Naive thymus-derived CD4-positive, alpha-beta T cell (primary cell): ENCODE measurements at regions of chr11 and their contacts with region 1.

Region 1: DNA sequence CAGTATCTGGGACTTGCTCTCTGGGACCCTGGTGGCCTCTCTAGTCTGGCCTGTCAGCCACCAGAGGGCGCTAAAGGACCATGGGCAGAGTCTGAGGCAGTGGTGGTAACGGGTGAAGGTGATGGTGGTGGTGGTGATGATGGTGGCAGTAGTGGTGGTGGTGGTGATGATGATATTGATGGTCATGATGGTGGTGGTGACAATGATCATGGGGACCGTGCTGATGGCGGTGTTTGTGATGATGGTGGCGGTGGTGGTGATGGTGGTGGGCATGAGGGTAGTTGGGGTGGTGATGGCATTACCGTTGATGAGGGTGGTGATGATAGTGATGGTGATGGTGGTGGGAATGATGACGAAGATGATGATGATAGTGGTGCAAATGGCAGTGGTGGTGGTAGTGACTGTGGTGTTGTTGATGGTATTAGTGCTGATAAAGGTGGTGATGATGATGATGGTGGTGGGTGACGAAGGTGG is 16.0 kb downstream of the TRPM5 start:
- DNase-seq: peak; percentile 67 to 85 (median 79)
- ATAC-seq: peak; percentile 87
- H3K4me3 ChIP-seq: no peak overlapping the region
- H3K4me3 Mint-ChIP-seq: no peak overlapping the region
- H3K27ac ChIP-seq: no peak overlapping the region
- H3K27ac Mint-ChIP-seq: no peak overlapping the region
- H3K4me1 ChIP-seq: no peaks in the 10 kb centered on the region
- H3K4me1 Mint-ChIP-seq: peaks cover 0 to 4% (median 0%) of the 10 kb centered on the region in 7 donors
- H3K27me3 ChIP-seq: no peaks in the 10 kb centered on the region
- H3K27me3 Mint-ChIP-seq: no peaks in the 10 kb centered on the region

Region 2: DNA sequence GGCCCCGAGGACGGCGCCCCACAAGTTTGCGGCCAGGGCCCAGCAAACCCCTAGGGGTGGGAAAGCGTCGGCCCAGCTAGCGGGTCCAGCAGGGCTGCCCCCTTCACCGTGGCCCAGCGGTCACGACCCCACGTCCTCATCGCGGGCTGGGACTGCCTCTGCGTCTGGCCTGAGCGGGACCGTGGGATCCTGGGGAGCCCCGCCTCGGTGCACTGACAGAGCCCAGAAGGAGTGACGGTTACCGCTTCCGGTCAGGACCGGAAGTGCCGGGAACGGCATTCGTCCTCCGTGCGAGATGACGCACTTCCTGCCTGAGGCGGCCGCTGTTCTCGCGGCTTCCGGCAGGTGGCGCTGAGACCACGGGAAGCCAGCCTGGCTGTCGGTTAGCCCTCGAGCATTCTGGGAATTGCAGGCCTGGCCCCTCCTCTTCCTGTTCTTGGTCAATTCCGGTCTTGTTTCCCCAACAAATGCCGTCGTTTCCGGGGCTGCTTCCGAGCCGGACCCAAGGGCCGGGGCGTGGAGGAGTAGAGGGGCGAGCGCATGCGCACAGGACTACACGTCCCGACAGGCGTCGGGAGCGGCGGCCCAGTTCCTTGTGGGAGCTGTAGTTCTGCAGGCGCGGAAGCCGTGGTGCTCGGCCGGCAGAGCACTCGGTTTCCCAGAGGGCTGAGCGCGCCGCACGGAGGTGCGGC is 28.1 kb before region 1 on chr11 and contains the start of gene TSSC4:
- CTCF ChIA-PET with region 1: no interaction called
- POLR2A ChIA-PET with region 1: no interaction called
- intact Hi-C with region 1: no loop called
- DNase-seq: peak; percentile 99 to 100 (median 100)
- ATAC-seq: peak; percentile 90
- H3K4me3 ChIP-seq: peak within 1 kb of the TSS; percentile 96
- H3K4me3 Mint-ChIP-seq: peak within 1 kb of the TSS; percentile 87 to 97 (median 92)
- H3K27ac ChIP-seq: peak within 1 kb of the TSS; percentile 93
- H3K27ac Mint-ChIP-seq: peak within 1 kb of the TSS; percentile 90 to 97 (median 95)
- H3K4me1 ChIP-seq: peaks cover 19 to 22% of the 10 kb centered on the region in 2 donors
- H3K4me1 Mint-ChIP-seq: peaks cover 0 to 28% (median 16%) of the 10 kb centered on the region in 7 donors
- H3K27me3 ChIP-seq: no peaks in the 10 kb centered on the region
- H3K27me3 Mint-ChIP-seq: peaks cover 0 to 2% (median 0%) of the 10 kb centered on the region in 5 donors
- total RNA-seq, gene TSSC4: 43.6 to 55.0 (median 50.9) TPM

Region 3: DNA sequence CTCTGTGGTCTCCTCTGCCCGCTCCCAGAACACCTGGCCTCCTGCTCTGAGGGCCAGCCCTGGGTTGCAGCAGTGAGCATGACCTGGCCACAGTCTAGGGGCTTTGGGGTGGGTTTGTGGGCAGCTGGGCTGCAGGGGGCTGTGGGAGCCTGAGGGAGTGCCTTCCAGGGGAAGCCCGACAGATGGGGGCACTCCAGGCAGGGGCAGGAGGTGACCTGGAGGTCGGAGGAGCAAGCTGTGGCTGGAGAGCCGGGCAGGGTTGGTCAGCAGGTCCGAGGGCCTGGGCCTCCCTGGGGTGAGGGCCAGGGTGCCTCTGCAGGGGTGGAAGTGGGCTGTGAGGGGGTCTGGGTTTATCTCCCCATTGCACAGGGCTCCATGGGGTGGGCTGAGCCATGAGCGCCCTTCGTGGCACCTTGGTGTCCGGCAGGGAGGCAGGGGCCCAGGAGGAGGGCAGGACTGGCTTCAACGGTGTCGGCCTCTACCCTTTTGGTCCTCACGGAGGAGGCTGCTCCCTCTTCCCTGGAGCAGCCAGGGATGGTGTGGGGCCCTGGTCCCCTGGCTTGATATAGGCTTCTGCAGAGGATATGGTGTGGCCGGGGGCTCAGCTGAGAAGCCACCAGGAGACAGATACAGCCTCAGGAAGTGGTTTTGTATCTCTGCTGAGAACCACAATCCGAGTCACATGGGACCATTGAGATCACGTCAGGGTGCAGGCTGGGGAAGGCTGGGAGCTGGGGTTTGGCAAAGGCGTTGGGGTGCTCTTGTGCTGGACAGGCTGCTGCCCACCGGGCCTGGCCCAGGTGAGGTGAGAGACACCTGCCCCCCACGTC is 38.7 kb after region 1 on chr11:
- CTCF ChIA-PET with region 1: no interaction called
- POLR2A ChIA-PET with region 1: interaction called, 3 read pairs
- intact Hi-C with region 1: loop called in 1 of 2 experiments (anchors 2 kb)
- DNase-seq: peak in 8 of 9 donors; percentile 53 to 80 (median 74)
- ATAC-seq: peak; percentile 95
- H3K4me3 ChIP-seq: peak overlapping the region; percentile 45
- H3K4me3 Mint-ChIP-seq: peak overlapping the region; percentile 75 to 93 (median 84)
- H3K27ac ChIP-seq: peak overlapping the region; percentile 52
- H3K27ac Mint-ChIP-seq: peak overlapping the region; percentile 57 to 96 (median 79)
- H3K4me1 ChIP-seq: peaks cover 17 to 57% of the 10 kb centered on the region in 2 donors
- H3K4me1 Mint-ChIP-seq: peaks cover 35 to 93% (median 65%) of the 10 kb centered on the region in 7 donors
- H3K27me3 ChIP-seq: no peaks in the 10 kb centered on the region
- H3K27me3 Mint-ChIP-seq: peaks cover 0 to 12% (median 0%) of the 10 kb centered on the region in 5 donors

Region 4: DNA sequence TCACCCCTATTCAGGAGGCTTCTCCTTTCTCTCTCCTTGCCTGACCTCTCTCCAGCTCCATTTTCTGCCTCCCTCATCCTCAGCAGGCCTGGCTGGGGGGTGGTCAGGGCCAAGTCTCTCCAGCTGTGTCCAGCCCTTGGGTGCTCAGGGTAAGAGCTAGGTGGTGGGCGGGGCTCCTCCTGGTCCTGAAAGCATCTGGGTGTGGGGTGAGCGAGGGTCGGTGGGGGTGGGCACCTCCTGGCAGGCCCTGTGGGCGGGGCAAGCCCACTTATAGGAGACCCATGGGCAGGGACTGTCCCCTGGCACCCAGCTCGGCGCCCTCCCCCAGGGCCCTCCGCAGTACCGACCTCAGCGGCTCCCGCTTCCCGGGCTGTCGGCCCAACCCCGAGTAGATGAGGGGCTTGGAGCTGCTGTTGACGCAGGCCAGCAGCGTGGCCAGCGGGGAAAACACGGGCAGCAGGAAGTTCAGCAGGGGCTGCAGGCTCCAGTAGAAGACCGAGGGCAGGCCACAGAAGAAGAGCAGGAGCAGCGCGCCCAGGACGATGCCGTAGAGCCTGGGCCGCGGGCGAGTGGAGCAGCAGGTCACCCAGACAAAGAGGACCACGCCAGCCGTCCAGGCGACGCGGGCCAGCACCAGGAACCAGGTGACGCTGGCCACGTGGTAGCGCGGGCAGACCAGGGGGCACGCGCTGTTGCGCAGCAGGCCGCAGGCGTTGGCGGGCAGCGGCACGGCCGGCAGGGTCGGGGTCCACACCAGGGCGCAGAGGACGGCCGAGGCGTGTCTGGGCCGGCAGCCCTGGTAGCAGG is 789.5 kb after region 1 on chr11:
- CTCF ChIA-PET with region 1: no interaction called
- POLR2A ChIA-PET with region 1: no interaction called
- intact Hi-C with region 1: loop called in 1 of 2 experiments (anchors 5 kb)
- DNase-seq: no peak
- ATAC-seq: no peak
- H3K4me3 ChIP-seq: no peak overlapping the region
- H3K4me3 Mint-ChIP-seq: no peak overlapping the region
- H3K27ac ChIP-seq: no peak overlapping the region
- H3K27ac Mint-ChIP-seq: no peak overlapping the region
- H3K4me1 ChIP-seq: peaks cover 0 to 3% of the 10 kb centered on the region in 2 donors
- H3K4me1 Mint-ChIP-seq: peaks cover 4 to 11% (median 7%) of the 10 kb centered on the region in 7 donors
- H3K27me3 ChIP-seq: no peaks in the 10 kb centered on the region
- H3K27me3 Mint-ChIP-seq: peaks cover 7 to 30% (median 14%) of the 10 kb centered on the region in 5 donors